ENCODE measurements at regions of chr11 and their contacts with region 1.

Region 1: GRCh38 chr11:68282141-68282970 is 10.6 kb upstream of the C11orf24 start:
- DNase-seq: peak; percentile 92
- ATAC-seq: peak; percentile 99
- H3K4me3 ChIP-seq: peak overlapping the region; percentile 48; the same call in 1 of the 2 replicates
- H3K27ac ChIP-seq: peak overlapping the region; percentile 61
- H3K4me1 ChIP-seq: peaks cover 16% of the 10 kb centered on the region
- H3K27me3 ChIP-seq: no peaks in the 10 kb centered on the region
- CTCF ChIP-seq: no peak
- EP300 ChIP-seq: peak; percentile 57 to 60; a peak in 2 of 4 replicates
- POLR2A ChIP-seq: no peak
- RAD21 ChIP-seq: no peak

Region 2: GRCh38 chr11:68146704-68147474 is 135.5 kb before region 1 on chr11:
- CTCF ChIA-PET with region 1: no interaction called
- POLR2A ChIA-PET with region 1: no interaction called
- RAD21 ChIA-PET with region 1: no interaction called
- SMC1A ChIA-PET with region 1: no interaction called
- in situ Hi-C with region 1: no loop called
- intact Hi-C with region 1: no loop called
- DNase-seq: no peak
- ATAC-seq: no peak; the same call in 1 of the 3 replicates
- H3K4me3 ChIP-seq: no peak overlapping the region
- H3K27ac ChIP-seq: no peak overlapping the region
- H3K4me1 ChIP-seq: peaks cover 6% of the 10 kb centered on the region
- H3K27me3 ChIP-seq: no peaks in the 10 kb centered on the region
- CTCF ChIP-seq: no peak
- EP300 ChIP-seq: no peak
- POLR2A ChIP-seq: no peak
- RAD21 ChIP-seq: no peak

Region 3: GRCh38 chr11:68271781-68272608 is 10.4 kb before region 1 on chr11 and contains the start of gene C11orf24:
- CTCF ChIA-PET with region 1: interaction called, 10 read pairs
- POLR2A ChIA-PET with region 1: interaction called, 13 read pairs
- RAD21 ChIA-PET with region 1: interaction called, 3 read pairs
- SMC1A ChIA-PET with region 1: interaction called, 8 read pairs
- in situ Hi-C with region 1: no loop called
- intact Hi-C with region 1: loop called (anchors 1 kb)
- DNase-seq: peak; percentile 82
- ATAC-seq: peak; percentile 84
- H3K4me3 ChIP-seq: peak within 1 kb of the TSS; percentile 97
- H3K27ac ChIP-seq: peak within 1 kb of the TSS; percentile 95
- H3K4me1 ChIP-seq: peaks cover 29% of the 10 kb centered on the region
- H3K27me3 ChIP-seq: no peaks in the 10 kb centered on the region
- CTCF ChIP-seq: no peak
- EP300 ChIP-seq: no peak
- POLR2A ChIP-seq: peak; percentile 93
- RAD21 ChIP-seq: no peak
- polyA plus RNA-seq, gene C11orf24: 4.3 to 9.9 TPM

Region 4: GRCh38 chr11:68317147-68317785 is 34.9 kb after region 1 on chr11:
- CTCF ChIA-PET with region 1: no interaction called
- POLR2A ChIA-PET with region 1: no interaction called
- RAD21 ChIA-PET with region 1: no interaction called
- SMC1A ChIA-PET with region 1: no interaction called
- in situ Hi-C with region 1: no loop called
- intact Hi-C with region 1: no loop called
- DNase-seq: no peak
- ATAC-seq: no peak
- H3K4me3 ChIP-seq: no peak overlapping the region
- H3K27ac ChIP-seq: no peak overlapping the region
- H3K4me1 ChIP-seq: peaks cover 6% of the 10 kb centered on the region
- H3K27me3 ChIP-seq: no peaks in the 10 kb centered on the region
- CTCF ChIP-seq: no peak
- EP300 ChIP-seq: no peak
- POLR2A ChIP-seq: no peak
- RAD21 ChIP-seq: no peak

Region 5: GRCh38 chr11:68370211-68371111 is 88.1 kb after region 1 on chr11:
- CTCF ChIA-PET with region 1: no interaction called
- POLR2A ChIA-PET with region 1: no interaction called
- RAD21 ChIA-PET with region 1: no interaction called
- SMC1A ChIA-PET with region 1: no interaction called
- in situ Hi-C with region 1: no loop called
- intact Hi-C with region 1: no loop called
- DNase-seq: peak; percentile 89
- ATAC-seq: peak; percentile 91
- H3K4me3 ChIP-seq: peak overlapping the region; percentile 34; the same call in 1 of the 2 replicates
- H3K27ac ChIP-seq: peak overlapping the region; percentile 89
- H3K4me1 ChIP-seq: peaks cover 33% of the 10 kb centered on the region
- H3K27me3 ChIP-seq: no peaks in the 10 kb centered on the region
- CTCF ChIP-seq: no peak
- EP300 ChIP-seq: peak; percentile 86 to 90; a peak in 3 of 4 replicates
- POLR2A ChIP-seq: 0 out of 2 replicates have a peak, but pooled peaks have one; percentile 26
- RAD21 ChIP-seq: 0 out of 2 replicates have a peak, but pooled peaks have one; percentile 13

Measured in GM12878 (cell line).